ENCODE measurements at regions of chr15 and their contacts with region 1.

Region 1: DNA sequence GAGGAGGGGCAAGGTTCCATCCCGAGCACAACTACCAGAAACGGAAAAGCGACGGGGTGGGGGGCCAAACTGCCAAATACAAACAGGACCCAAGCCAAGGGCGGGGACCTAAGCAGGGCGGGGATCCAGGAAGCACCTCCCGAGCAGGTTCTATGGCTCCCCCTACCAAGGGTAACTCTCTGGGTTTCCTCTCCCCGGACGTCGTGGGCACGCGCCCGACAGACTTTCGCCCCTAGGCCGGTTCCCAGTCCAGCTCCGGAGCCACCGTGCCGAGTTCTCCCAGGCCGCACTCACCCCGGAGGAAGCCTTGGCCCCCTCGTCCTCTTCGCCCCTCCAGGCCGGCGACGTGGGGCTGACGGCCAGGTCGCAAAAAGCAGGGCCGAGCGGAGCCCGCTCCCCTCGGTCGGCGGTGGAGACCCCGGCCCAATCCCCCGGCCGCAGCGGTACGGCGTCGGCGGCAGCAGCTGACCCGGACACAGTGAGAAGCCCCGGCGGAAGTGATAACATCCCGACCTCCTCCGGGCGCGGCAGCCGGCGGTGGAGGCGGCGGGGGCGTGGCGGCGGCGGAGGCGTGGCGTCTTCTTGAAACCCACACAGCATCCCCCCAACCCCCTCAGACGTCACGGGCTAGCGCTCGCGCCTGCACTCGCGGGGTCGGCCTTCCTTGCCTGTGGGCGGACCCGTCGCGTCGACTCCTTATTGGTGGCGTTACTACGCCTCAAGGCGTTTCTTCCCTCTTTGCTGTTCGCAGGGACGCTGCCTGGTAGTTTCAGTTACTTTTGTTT is at the start of gene BNIP2:
- DNase-seq: peak; percentile 99
- H3K4me3 ChIP-seq: peak within 1 kb of the TSS; percentile 66 to 100 (median 100)
- H3K27ac ChIP-seq: peak within 1 kb of the TSS; percentile 100
- H3K4me1 ChIP-seq: peaks cover 43% of the 10 kb centered on the region
- H3K27me3 ChIP-seq: no peaks in the 10 kb centered on the region
- CTCF ChIP-seq: no peak
- POLR2A ChIP-seq: peak; percentile 90
- total RNA-seq, gene BNIP2: 90.1 and 99.2 TPM in 2 replicates

Region 2: DNA sequence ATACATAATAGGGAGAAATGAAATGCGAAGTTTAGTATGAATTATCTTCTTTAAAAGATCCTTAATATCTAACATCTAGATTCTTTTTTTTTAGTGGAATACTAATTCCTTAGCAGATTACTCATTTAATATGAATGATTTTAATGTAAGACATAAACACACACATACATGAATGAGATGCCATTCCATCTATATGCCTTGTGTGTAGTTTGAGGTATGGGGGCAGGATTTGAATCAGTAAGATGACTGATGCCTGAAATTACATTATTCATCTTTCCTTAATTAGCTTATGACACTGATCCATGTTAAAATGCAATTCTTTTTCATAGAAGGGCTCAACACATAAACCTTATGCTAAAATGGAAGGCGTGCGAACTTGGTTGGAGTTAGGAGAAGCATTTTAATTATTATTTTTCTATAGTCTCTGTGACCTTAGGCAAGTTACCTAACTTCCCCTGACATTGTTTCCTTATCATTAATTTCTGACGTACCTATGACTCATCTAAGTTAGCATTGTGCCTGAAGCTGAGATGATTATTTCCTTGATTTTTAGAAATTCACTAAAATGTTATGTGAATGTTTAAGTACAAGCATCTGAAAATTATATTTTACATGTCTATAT is 10.9 kb after region 1 on chr15:
- CTCF ChIA-PET with region 1: interaction called, 21 read pairs
- POLR2A ChIA-PET with region 1: interaction called, 5 read pairs
- dilution Hi-C with region 1: no loop called
- intact Hi-C with region 1: loop called (anchors 1 kb)
- DNase-seq: peak; percentile 69
- H3K4me3 ChIP-seq: no peak overlapping the region
- H3K27ac ChIP-seq: peak overlapping the region; percentile 40
- H3K4me1 ChIP-seq: peaks cover 14% of the 10 kb centered on the region
- H3K27me3 ChIP-seq: no peaks in the 10 kb centered on the region
- CTCF ChIP-seq: no peak
- POLR2A ChIP-seq: no peak

Region 3: DNA sequence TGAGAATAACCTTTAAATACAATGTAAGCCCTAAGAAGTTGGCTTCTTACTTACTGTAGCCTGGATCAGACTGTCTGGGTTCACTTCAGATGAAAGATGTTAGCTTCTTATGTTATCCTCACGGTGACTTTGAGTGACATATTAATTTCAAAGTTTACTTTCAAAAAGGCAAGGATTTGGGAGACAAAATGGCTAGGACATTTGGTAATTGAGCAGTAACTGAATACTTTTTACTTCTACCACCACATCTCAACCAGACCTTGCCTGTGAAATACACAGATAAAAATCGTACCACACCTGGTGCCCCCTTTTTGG is 36.1 kb after region 1 on chr15:
- CTCF ChIA-PET with region 1: interaction called, 40 read pairs
- POLR2A ChIA-PET with region 1: no interaction called
- dilution Hi-C with region 1: no loop called
- intact Hi-C with region 1: no loop called
- DNase-seq: no peak
- H3K4me3 ChIP-seq: no peak overlapping the region
- H3K27ac ChIP-seq: no peak overlapping the region
- H3K4me1 ChIP-seq: no peaks in the 10 kb centered on the region
- H3K27me3 ChIP-seq: peaks cover 11 to 24% of the 10 kb centered on the region in 2 experiments
- CTCF ChIP-seq: no peak
- POLR2A ChIP-seq: no peak

Region 4: GRCh38 chr15:60004009-60004851 is 315.2 kb after region 1 on chr15 and contains the start of gene FOXB1:
- CTCF ChIA-PET with region 1: no interaction called
- POLR2A ChIA-PET with region 1: no interaction called
- dilution Hi-C with region 1: no loop called
- intact Hi-C with region 1: loop called (anchors 5 kb)
- DNase-seq: no peak
- H3K4me3 ChIP-seq: no peak within 1 kb of the TSS
- H3K27ac ChIP-seq: no peak within 1 kb of the TSS
- H3K4me1 ChIP-seq: peaks cover 8% of the 10 kb centered on the region
- H3K27me3 ChIP-seq: peaks cover 89 to 99% of the 10 kb centered on the region in 2 experiments
- CTCF ChIP-seq: no peak
- POLR2A ChIP-seq: no peak
- total RNA-seq, gene FOXB1: not detected in 2 replicates

Region 5: GRCh38 chr15:60326824-60327654 is 638.0 kb after region 1 on chr15:
- CTCF ChIA-PET with region 1: interaction called, 188 read pairs
- POLR2A ChIA-PET with region 1: interaction called, 3 read pairs
- dilution Hi-C with region 1: no loop called
- intact Hi-C with region 1: loop called (anchors 1 kb)
- DNase-seq: peak; percentile 74
- H3K4me3 ChIP-seq: no peak overlapping the region
- H3K27ac ChIP-seq: no peak overlapping the region
- H3K4me1 ChIP-seq: no peaks in the 10 kb centered on the region
- H3K27me3 ChIP-seq: peaks cover 30 to 54% of the 10 kb centered on the region in 2 experiments
- CTCF ChIP-seq: peak; percentile 64 to 75
- POLR2A ChIP-seq: no peak

Region 6: DNA sequence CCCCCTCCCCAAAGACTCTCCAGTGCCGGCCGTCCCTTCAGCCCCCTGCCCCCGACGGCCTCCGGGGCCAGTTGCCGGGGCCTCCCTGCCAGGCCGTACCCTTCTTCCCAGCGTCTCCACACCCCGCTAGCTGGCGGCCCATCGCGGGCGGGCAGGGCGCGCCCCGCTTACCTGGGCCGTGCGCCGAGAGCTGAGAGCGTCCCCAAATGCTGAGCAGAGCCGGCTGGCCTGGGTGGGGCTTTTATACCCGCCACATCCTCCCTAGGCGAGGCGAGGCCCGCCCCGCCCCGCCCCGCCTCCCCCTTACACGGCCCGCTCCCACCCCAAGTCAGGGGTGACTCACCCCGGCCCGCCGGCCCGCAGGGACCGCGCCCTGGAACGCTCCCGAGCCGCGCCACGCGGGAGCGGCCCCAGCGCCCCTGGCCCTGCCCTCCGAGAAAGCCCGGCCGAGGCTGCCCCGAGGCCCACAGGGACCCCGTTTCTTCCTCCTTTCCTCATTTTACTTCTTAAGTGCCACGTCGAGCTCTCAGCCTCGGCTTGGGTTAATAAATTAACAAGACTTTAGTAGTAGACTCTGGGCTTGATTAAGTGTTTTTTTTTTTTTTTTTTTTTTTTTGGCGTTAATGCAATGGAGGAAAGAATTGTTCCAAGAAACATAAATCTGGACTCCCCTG is 708.9 kb after region 1 on chr15 and contains the start of gene ANXA2:
- CTCF ChIA-PET with region 1: no interaction called
- POLR2A ChIA-PET with region 1: no interaction called
- dilution Hi-C with region 1: no loop called
- intact Hi-C with region 1: loop called (anchors 5 kb)
- DNase-seq: peak; percentile 80
- H3K4me3 ChIP-seq: peak within 1 kb of the TSS; percentile 82 to 99 (median 96)
- H3K27ac ChIP-seq: peak within 1 kb of the TSS; percentile 97
- H3K4me1 ChIP-seq: peaks cover 61% of the 10 kb centered on the region
- H3K27me3 ChIP-seq: no peaks in the 10 kb centered on the region
- CTCF ChIP-seq: no peak
- POLR2A ChIP-seq: peak; percentile 96
- total RNA-seq, gene ANXA2: 2,636 and 2,725 TPM in 2 replicates

Measured in endothelial cell of umbilical vein (primary cell).